ENCODE measurements at regions of chr3 and their contacts with region 1.

Region 1: DNA sequence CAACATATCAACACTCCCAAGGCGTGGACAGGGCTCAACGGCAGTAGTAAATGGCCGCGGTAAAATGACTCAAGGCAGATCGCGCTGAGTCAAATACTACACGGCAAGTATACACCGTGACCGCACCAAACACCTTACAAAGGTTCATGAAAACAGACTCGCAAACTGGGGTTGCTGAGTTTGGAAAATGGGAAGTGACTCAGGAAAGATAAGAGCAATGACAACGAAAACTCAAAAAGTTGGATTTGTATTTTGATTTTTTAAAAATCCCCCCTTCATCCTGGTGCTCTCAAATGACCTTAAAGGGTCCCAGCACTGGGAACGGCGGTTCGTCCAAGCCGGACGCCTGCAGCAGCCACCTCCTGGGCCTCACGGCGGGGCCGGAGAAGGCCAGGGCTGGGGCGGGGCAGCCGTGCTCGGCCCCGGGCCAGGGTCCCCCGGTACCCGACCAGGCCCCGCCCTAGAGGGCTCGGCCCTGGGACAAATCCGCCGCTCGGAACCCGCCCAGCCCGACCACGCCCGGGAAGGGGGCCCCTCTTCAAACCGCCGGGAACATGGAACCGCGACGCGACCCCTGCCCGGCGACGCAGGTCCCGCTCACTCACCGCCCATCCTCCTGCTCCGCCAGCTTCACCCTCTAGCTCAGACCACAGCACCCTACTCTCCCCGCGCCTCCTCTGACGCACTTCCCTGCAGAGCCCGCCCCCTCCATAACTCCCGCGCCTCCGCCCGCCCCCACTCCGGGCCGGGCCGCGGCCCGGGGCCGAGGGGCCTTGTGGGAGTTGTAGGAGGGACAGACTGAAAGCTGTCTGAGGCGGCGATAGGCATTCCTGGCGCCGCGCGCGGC is at the start of gene CLDND1:
- DNase-seq: peak; percentile 98
- H3K4me3 Mint-ChIP-seq: peak within 1 kb of the TSS; percentile 88
- H3K27ac Mint-ChIP-seq: peak within 1 kb of the TSS; percentile 93
- H3K4me1 Mint-ChIP-seq: peaks cover 57% of the 10 kb centered on the region
- H3K27me3 Mint-ChIP-seq: no peaks in the 10 kb centered on the region
- total RNA-seq, gene CLDND1: 279 and 288 TPM in 2 replicates

Region 2: GRCh38 chr3:97821810-97822775 is 700.4 kb before region 1 on chr3 and contains the start of gene CRYBG3:
- intact Hi-C with region 1: loop called (anchors 5 kb)
- DNase-seq: peak; percentile 97
- H3K4me3 Mint-ChIP-seq: peak within 1 kb of the TSS; percentile 99
- H3K27ac Mint-ChIP-seq: peak within 1 kb of the TSS; percentile 95
- H3K4me1 Mint-ChIP-seq: peaks cover 32% of the 10 kb centered on the region
- H3K27me3 Mint-ChIP-seq: peaks cover 33% of the 10 kb centered on the region
- total RNA-seq, gene CRYBG3: 8.1 and 8.3 TPM in 2 replicates

Region 3: DNA sequence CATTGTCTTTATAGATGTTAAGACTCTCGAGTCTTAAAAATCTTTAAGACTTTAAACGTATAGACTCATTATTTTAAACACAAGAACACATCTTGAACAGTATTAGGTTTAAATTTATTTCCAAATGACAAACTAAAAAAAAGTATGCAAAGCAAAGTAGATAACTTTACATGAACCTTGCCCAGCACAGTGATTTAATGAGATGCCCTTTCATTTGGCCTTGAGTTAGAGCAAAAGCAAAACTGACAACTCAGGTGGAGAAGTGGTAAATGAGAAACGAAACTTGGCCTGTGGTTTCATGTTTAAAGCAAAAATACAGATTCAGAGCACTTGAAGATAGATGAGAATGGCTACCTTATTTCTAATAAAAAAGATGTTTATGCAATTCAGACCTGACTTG is 17.9 kb after region 1 on chr3:
- intact Hi-C with region 1: loop called (anchors 1 kb)
- DNase-seq: peak; percentile 82
- H3K4me3 Mint-ChIP-seq: peak overlapping the region; percentile 45
- H3K27ac Mint-ChIP-seq: peak overlapping the region; percentile 46
- H3K4me1 Mint-ChIP-seq: peaks cover 50% of the 10 kb centered on the region
- H3K27me3 Mint-ChIP-seq: no peaks in the 10 kb centered on the region

Region 4: GRCh38 chr3:98564282-98565005 is 42.0 kb after region 1 on chr3:
- intact Hi-C with region 1: loop called (anchors 1 kb)
- DNase-seq: peak; percentile 76
- H3K4me3 Mint-ChIP-seq: peak overlapping the region; percentile 58
- H3K27ac Mint-ChIP-seq: peak overlapping the region; percentile 64
- H3K4me1 Mint-ChIP-seq: peaks cover 66% of the 10 kb centered on the region
- H3K27me3 Mint-ChIP-seq: no peaks in the 10 kb centered on the region

Region 5: DNA sequence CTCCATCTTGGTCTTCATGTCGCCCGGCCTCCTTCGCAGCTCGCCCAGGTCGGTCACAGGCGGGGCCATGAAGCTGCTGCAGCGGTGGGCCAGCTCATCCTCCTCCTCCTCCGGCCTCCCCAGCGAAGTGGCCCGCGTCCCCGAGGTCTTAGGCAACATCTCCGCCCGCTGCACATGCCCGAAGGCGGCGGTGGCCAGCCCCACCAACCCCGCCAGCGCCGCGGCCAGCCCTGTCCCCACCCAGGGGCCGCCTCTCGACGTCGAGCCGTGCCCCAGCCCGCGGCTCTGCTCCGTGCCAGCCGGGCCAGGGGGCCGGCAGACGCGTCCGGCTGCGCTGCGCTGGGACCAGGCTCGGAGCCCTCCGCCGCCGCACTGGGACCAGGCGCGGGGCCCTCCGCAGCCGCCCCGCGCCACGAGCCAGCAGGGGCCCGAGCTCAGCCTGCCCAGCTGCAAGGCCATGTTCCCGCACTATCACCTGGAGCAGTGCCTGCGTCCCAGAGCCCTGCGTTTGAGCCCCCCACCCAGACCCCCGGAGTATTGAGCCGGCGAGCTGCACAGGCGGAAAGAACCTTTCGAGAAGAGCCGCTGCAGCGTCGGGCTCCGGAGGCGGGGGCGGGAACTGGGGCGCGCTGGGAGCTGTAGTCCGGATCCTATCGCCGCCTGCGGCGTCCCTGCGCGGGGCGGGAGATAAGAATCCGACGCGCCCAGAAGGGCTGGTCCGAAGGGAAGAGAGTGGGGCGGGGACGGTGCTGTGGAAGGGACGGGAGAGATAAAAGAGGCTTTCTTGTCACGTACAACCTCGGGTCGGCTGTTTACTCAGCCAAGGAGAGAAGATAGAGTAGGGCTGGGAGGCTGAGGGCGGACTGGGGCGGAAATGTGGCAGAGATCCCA is 70.8 kb after region 1 on chr3 and contains the start of gene CPOX:
- intact Hi-C with region 1: loop called (anchors 1 kb)
- DNase-seq: peak; percentile 97
- H3K4me3 Mint-ChIP-seq: peak within 1 kb of the TSS; percentile 90
- H3K27ac Mint-ChIP-seq: peak within 1 kb of the TSS; percentile 91
- H3K4me1 Mint-ChIP-seq: peaks cover 48% of the 10 kb centered on the region
- H3K27me3 Mint-ChIP-seq: no peaks in the 10 kb centered on the region
- total RNA-seq, gene CPOX: 46.4 and 46.6 TPM in 2 replicates

Region 6: DNA sequence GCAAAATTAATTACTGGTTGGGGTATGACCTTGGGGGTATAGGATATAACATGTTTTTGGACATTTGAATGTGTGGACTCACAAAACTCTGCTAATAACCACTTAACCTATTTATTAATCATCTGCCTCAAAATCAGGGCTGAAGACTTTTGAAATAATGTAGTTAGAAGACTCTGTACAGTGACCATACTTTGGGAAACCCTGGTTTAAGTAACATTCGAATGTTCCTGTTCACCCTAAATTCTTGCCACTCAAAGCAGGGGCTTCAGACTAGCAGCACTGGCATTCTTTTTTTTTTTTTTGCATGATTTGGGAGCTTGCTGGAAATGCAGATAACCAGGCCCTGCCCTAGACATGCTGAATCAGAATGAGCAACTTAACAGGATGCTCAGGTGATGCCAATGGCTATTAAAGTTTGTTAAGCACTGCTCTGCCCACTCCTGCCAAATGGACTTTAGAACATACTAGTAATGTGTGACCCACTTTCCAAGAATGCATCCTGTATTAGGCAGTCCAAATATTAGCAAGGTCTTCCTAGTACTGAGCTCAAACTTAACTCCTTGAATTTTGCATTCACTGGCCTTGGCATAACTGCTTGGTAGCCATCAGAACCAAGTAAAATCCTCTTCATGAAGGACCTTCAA is 227.9 kb after region 1 on chr3:
- intact Hi-C with region 1: no loop called
- DNase-seq: no peak
- H3K4me3 Mint-ChIP-seq: no peak overlapping the region
- H3K27ac Mint-ChIP-seq: no peak overlapping the region
- H3K4me1 Mint-ChIP-seq: no peaks in the 10 kb centered on the region
- H3K27me3 Mint-ChIP-seq: peaks cover 12% of the 10 kb centered on the region

Measured in activated CD4-positive, alpha-beta T cell treated with anti-CD3 and anti-CD28 coated beads, Interleukin-2, amount 10 ng/mL, durations not matched to agents 24 days and 14 days (primary cell).